ENCODE measurements at regions of chr15 and their contacts with region 1.

Region 1: DNA sequence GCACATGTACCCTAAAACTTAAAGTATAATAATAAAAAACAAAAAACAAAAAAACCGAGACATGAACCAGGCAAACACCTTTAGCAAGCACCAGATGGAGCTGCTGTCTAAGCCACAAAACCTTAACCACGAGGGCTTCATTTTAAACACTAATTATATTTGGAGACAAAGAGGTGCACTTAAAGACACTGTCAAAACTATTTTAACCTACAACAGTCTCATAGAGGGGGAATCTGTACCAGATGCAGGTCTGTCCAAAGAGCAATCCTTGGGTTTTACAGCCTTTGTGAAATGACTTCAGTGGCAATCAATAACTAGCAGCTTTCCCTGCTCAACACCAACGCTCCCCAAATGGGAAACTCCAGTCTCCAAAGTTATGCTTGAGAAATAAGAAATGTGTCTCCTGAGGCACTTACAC is 115.7 kb upstream of the TSPAN3 start:
- DNase-seq: peak; percentile 65
- H3K4me3 ChIP-seq: no peak overlapping the region
- H3K27ac ChIP-seq: peak overlapping the region; percentile 12
- H3K4me1 ChIP-seq: peaks cover 42% of the 10 kb centered on the region
- H3K27me3 ChIP-seq: no peaks in the 10 kb centered on the region
- CTCF ChIP-seq: peak; percentile 77

Region 2: DNA sequence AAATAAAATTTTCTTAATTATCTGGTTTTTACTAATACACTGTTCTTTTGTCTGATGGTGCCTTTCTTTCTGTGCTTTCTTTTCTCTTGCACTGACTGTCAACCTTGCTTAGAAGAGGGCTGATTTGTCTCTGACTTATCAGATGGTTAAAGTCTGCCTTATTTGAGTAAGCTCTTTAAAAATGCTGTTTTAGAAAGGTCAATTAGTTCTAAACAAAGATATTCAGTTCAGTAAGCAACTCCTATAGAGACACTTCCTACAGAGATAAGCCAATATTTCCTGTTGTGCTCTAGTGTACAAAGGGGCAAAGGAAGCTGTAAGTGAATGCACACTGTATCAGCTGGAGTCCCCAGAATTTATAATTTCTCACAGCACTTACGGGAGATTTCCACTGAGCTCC is 37.7 kb after region 1 on chr15:
- CTCF ChIA-PET with region 1: no interaction called
- POLR2A ChIA-PET with region 1: no interaction called
- intact Hi-C with region 1: loop called (anchors 2 kb)
- DNase-seq: peak; percentile 96
- H3K4me3 ChIP-seq: peak overlapping the region; percentile 8
- H3K27ac ChIP-seq: peak overlapping the region; percentile 54
- H3K4me1 ChIP-seq: peaks cover 54% of the 10 kb centered on the region
- H3K27me3 ChIP-seq: no peaks in the 10 kb centered on the region
- CTCF ChIP-seq: no peak

Region 3: GRCh38 chr15:77419836-77420609 is 233.4 kb after region 1 on chr15 and contains the start of gene PEAK1:
- CTCF ChIA-PET with region 1: no interaction called
- POLR2A ChIA-PET with region 1: no interaction called
- intact Hi-C with region 1: loop called (anchors 5 kb)
- DNase-seq: peak; percentile 100
- H3K4me3 ChIP-seq: peak within 1 kb of the TSS; percentile 73
- H3K27ac ChIP-seq: peak within 1 kb of the TSS; percentile 97
- H3K4me1 ChIP-seq: peaks cover 41% of the 10 kb centered on the region
- H3K27me3 ChIP-seq: no peaks in the 10 kb centered on the region
- CTCF ChIP-seq: no peak
- total RNA-seq, gene PEAK1: 36.7 and 39.8 TPM in 2 replicates

Region 4: GRCh38 chr15:77496710-77497103 is 310.1 kb after region 1 on chr15:
- CTCF ChIA-PET with region 1: interaction called, 33 read pairs
- POLR2A ChIA-PET with region 1: no interaction called
- intact Hi-C with region 1: loop called (anchors 1 kb)
- DNase-seq: peak; percentile 95
- H3K4me3 ChIP-seq: peak overlapping the region; percentile 24
- H3K27ac ChIP-seq: peak overlapping the region; percentile 84
- H3K4me1 ChIP-seq: peaks cover 30% of the 10 kb centered on the region
- H3K27me3 ChIP-seq: no peaks in the 10 kb centered on the region
- CTCF ChIP-seq: peak; percentile 97

Region 5: DNA sequence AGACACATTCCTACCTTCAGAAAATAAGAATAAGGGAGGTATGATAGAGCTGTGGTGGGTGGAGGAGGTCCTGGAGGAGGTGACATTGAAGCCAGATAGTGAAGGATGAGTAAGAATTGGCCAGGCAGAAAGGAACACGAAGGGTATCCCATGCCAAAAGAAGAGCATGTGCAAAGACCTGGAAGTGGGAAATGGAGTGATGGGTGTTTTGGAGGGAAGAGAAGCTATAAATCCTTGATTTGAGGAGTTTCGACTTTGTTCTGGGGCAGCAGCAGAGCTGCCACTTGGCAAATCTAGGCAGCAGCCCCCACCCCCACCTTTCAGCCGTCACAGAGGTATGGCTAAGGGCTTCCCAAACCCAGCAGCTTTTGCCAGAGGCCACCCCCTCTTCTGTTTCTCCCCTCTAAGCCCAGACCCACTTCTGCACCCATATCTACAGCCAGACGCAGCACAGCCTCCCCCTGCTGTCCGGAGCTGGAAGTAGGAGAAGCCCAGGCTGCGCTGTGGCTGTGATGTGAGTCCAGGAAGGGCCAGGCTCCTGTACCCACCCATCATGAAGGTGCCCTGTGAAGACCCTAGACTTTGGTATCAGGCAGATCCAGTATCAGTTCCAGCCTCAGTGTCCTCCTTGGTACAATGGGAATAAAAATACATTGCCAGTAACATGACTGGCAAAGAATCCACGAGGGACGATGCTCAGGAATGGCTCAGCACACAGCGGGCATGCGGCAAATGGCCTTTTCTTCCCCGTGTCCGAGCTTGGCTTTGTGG is 634.8 kb after region 1 on chr15:
- CTCF ChIA-PET with region 1: interaction called, 3 read pairs
- POLR2A ChIA-PET with region 1: no interaction called
- intact Hi-C with region 1: loop called (anchors 2 kb)
- DNase-seq: peak; percentile 89
- H3K4me3 ChIP-seq: peak overlapping the region; percentile 93
- H3K27ac ChIP-seq: peak overlapping the region; percentile 91
- H3K4me1 ChIP-seq: peaks cover 36% of the 10 kb centered on the region
- H3K27me3 ChIP-seq: no peaks in the 10 kb centered on the region
- CTCF ChIP-seq: peak; percentile 98

Region 6: GRCh38 chr15:77870195-77871065 is 683.8 kb after region 1 on chr15:
- CTCF ChIA-PET with region 1: no interaction called
- POLR2A ChIA-PET with region 1: no interaction called
- intact Hi-C with region 1: loop called (anchors 10 kb)
- DNase-seq: peak; percentile 63
- H3K4me3 ChIP-seq: no peak overlapping the region
- H3K27ac ChIP-seq: no peak overlapping the region
- H3K4me1 ChIP-seq: peaks cover 24% of the 10 kb centered on the region
- H3K27me3 ChIP-seq: no peaks in the 10 kb centered on the region
- CTCF ChIP-seq: peak; percentile 72

Measured in A673 (cell line).